Heart left ventricle (tissue), 16 donors: ENCODE measurements at regions of chr20 and their contacts with region 1.

Region 1: DNA sequence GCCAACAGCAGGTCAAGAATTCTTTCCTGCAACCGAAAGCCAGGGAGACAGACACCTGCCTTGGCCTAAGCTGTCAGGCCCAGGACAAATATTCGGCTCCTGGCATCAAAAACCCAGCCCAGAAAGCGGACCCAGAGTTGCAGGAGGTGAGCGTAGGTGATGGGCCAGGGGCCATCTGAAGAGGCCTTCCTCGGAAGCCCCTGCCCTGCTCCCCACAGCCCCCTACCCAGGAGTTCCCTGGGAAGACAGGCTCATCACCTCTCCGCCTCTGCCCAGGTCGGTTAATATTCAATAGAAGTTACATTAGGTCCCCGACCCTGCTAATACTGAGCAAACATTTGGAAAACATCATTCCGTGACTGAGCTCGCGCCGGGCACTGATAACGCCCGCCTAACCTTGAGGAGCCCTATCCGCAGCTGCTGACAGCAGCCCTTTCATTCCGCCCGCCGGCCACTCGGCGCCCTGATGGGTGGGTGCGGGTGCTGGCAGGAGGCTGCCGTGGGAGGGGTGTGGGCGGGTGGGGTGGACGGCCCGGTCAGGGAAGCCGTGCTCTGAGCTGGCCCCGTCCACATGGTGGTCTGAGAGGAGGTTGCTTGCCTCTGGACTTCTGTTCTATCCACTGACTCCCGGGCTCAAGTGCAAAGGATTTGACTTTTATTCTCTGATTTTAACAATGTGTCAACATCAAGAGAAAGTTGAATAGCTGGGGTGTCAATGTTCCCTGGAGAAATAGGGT is 55.7 kb downstream of the HNF4A start:
- DNase-seq: peak in 1 of 5 donors; percentile 56
- ATAC-seq: no peak
- H3K4me3 ChIP-seq: no peak overlapping the region
- H3K27ac ChIP-seq: no peak overlapping the region
- H3K4me1 ChIP-seq: no peaks in the 10 kb centered on the region
- H3K27me3 ChIP-seq: peaks cover 0 to 32% (median 4%) of the 10 kb centered on the region in 9 donors
- CTCF ChIP-seq: no peak
- POLR2A ChIP-seq: no peak

Region 2: GRCh38 chr20:44425923-44426322 is 14.7 kb after region 1 on chr20:
- intact Hi-C with region 1: loop called in 1 of 10 experiments (anchors 1 kb)
- DNase-seq: no peak
- ATAC-seq: no peak
- H3K4me3 ChIP-seq: no peak overlapping the region
- H3K27ac ChIP-seq: no peak overlapping the region
- H3K4me1 ChIP-seq: no peaks in the 10 kb centered on the region
- H3K27me3 ChIP-seq: peaks cover 0 to 17% (median 4%) of the 10 kb centered on the region in 9 donors
- CTCF ChIP-seq: no peak
- POLR2A ChIP-seq: no peak

Region 3: GRCh38 chr20:44471481-44471882 is 60.3 kb after region 1 on chr20:
- intact Hi-C with region 1: no loop called
- DNase-seq: no peak
- ATAC-seq: no peak
- H3K4me3 ChIP-seq: no peak overlapping the region
- H3K27ac ChIP-seq: no peak overlapping the region
- H3K4me1 ChIP-seq: peaks cover 0 to 16% (median 10%) of the 10 kb centered on the region in 12 donors
- H3K27me3 ChIP-seq: no peaks in the 10 kb centered on the region
- CTCF ChIP-seq: peak in 11 of 12 donors; percentile 11 to 45 (median 37)
- POLR2A ChIP-seq: no peak